Heart right ventricle (tissue), 16 donors: ENCODE measurements at regions of chr6 and their contacts with region 1.

Region 1: DNA sequence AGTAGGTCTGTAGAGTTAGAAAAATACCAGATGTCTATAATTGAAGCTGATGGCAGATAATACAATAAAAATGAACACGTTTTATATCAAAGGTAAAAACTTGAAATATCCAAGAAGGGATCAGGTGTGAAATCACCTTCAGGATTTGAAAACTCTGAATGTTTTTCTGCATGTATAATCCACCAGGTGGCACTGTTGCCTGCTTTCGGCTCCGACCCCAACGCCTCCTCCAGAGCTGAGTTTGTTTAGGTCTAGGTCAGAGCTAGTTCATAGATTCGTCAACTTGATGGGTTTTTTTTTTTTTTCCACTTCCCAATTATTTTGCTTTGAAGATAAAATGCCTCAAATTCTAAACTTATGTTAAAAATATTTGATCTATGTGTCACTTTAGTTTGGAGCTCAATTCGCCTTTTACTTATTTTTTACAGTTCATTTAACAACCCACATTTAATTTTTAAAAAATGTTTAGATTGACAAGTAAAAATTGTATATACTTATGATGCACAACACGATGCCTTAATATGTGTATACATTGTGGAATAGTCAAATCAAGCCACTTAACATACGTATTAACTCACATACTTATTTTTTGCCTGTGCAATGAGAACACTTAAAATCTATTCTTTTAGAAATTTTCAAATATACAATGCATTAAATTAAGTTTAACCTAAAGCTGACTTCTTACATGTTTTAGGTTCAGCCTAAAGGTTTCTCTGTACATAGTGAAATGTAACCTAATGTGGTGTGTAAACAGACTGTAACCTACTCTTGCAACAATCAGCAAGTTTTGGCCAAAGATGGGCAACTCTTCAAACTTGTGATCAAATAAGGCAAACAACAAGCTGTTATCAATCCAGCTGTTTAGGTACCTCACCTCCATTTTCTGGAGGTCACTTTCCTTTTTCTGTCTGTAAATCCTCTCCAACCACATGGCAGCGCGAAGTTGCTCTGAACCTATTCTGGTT is 39.4 kb upstream of the ENPP4 start:
- DNase-seq: peak; percentile 37 to 60
- ATAC-seq: peak in 7 of 8 donors; percentile 59 to 82 (median 69)
- H3K4me3 ChIP-seq: no peak overlapping the region
- H3K27ac ChIP-seq: no peak overlapping the region
- H3K4me1 ChIP-seq: peaks cover 0 to 7% (median 0%) of the 10 kb centered on the region in 9 donors
- H3K27me3 ChIP-seq: no peaks in the 10 kb centered on the region
- CTCF ChIP-seq: peak; percentile 60 to 91 (median 84)

Region 2: GRCh38 chr6:46129629-46130511 is 39.5 kb after region 1 on chr6 and contains the start of gene ENPP4:
- intact Hi-C with region 1: loop called in 1 of 10 experiments (anchors 5 kb)
- DNase-seq: peak; percentile 81 to 84
- ATAC-seq: peak; percentile 100
- H3K4me3 ChIP-seq: peak within 1 kb of the TSS; percentile 60 to 86 (median 75)
- H3K27ac ChIP-seq: peak within 1 kb of the TSS in 9 of 10 donors; percentile 59 to 90 (median 79)
- H3K4me1 ChIP-seq: peaks cover 2 to 48% (median 23%) of the 10 kb centered on the region in 9 donors
- H3K27me3 ChIP-seq: no peaks in the 10 kb centered on the region
- CTCF ChIP-seq: peak in 4 of 9 donors; percentile 11 to 40 (median 23)
- total RNA-seq, gene ENPP4: 15.1 to 23.8 (median 19.2) TPM

Region 3: GRCh38 chr6:46221222-46221793 is 130.9 kb after region 1 on chr6:
- intact Hi-C with region 1: loop called in 3 of 10 experiments (anchors 5 kb)
- DNase-seq: no peak
- ATAC-seq: peak in 7 of 8 donors; percentile 60 to 81 (median 70)
- H3K4me3 ChIP-seq: no peak overlapping the region
- H3K27ac ChIP-seq: no peak overlapping the region
- H3K4me1 ChIP-seq: peaks cover 0 to 39% (median 11%) of the 10 kb centered on the region in 9 donors
- H3K27me3 ChIP-seq: no peaks in the 10 kb centered on the region
- CTCF ChIP-seq: peak; percentile 60 to 91 (median 83)

Region 4: DNA sequence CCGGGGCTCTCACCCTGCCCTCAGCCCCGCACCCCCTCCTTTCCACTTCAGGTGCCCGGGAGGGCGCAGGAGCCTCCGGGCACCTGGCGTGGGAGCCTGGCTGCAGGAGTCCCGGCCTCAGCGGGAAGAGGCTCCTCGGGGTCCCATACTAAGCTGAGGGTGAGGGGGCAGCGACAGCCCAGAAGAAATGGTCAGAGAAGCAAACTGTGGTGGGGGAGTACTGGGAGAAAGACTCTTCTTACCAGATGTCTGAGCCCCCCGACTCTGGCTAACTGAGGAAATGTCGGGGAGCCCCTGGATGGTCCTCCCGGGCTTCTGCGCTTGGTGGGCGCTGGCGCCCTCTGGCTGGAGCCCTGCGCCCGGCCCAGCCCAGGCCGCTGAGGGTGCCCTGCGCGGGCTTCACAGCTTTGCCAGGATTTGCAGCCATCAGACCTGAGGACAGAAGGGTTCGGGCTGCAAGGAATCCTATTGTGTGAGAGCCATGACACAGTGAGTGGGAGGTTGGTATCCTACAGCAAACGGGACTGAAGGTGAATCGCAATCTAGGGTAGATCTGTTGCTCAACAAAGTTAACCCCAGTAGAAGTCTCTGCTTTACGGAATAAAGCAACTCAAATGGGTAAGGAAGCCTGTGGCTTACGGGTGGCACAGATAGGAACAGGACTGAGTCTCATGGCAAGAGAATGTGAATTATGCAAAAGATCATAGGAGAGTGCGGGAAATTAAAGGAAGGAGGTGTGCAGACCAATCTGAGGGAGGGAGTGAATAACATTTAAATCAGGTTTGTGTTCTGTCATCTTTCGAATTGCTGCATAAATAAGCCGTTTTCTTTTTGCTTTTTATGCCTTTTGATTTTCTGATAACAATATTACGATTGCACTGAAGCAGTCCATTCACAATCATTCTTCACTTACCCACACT is 401.5 kb after region 1 on chr6:
- intact Hi-C with region 1: loop called in 2 of 10 experiments (anchors 10 kb)
- DNase-seq: peak; percentile 56 to 65
- ATAC-seq: peak; percentile 84 to 94 (median 92)
- H3K4me3 ChIP-seq: peak overlapping the region; percentile 55 to 79 (median 70)
- H3K27ac ChIP-seq: peak overlapping the region; percentile 70 to 97 (median 90)
- H3K4me1 ChIP-seq: peaks cover 0 to 42% (median 11%) of the 10 kb centered on the region in 9 donors
- H3K27me3 ChIP-seq: peaks cover 0 to 73% (median 0%) of the 10 kb centered on the region in 7 donors
- CTCF ChIP-seq: peak; percentile 48 to 89 (median 74)

Region 5: GRCh38 chr6:46637145-46637544 is 546.7 kb after region 1 on chr6:
- intact Hi-C with region 1: loop called in 1 of 10 experiments (anchors 10 kb)
- DNase-seq: no peak
- ATAC-seq: peak in 1 of 8 donors; percentile 27
- H3K4me3 ChIP-seq: no peak overlapping the region
- H3K27ac ChIP-seq: no peak overlapping the region
- H3K4me1 ChIP-seq: peaks cover 0 to 6% (median 0%) of the 10 kb centered on the region in 9 donors
- H3K27me3 ChIP-seq: no peaks in the 10 kb centered on the region
- CTCF ChIP-seq: no peak